ENCODE measurements at regions of chr4 and their contacts with region 1.

Region 1: DNA sequence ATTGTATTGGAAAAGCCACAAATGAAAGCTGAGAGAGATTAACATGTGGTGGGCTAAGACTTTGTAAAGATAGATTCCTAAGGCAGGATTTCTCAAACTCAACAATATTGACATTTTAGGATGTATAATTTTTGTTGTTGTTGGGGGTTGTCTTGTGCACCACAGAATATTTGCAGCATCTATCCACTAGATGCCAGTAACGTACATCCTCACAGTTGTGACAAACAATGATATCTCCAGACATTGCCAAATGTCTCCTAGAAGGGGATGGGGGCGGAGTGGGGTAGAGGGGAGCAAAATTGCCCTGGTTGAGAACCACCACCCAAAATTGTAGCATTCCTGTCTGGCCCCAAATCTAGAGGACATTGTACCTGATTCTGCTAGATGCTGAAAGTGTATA is 14.7 kb upstream of the CBR4 start:
- DNase-seq: no peak
- ATAC-seq: peak; percentile 85 to 90
- H3K4me3 ChIP-seq: no peak overlapping the region
- H3K27ac ChIP-seq: no peak overlapping the region
- H3K4me1 ChIP-seq: no peaks in the 10 kb centered on the region
- H3K27me3 ChIP-seq: no peaks in the 10 kb centered on the region

Region 2: DNA sequence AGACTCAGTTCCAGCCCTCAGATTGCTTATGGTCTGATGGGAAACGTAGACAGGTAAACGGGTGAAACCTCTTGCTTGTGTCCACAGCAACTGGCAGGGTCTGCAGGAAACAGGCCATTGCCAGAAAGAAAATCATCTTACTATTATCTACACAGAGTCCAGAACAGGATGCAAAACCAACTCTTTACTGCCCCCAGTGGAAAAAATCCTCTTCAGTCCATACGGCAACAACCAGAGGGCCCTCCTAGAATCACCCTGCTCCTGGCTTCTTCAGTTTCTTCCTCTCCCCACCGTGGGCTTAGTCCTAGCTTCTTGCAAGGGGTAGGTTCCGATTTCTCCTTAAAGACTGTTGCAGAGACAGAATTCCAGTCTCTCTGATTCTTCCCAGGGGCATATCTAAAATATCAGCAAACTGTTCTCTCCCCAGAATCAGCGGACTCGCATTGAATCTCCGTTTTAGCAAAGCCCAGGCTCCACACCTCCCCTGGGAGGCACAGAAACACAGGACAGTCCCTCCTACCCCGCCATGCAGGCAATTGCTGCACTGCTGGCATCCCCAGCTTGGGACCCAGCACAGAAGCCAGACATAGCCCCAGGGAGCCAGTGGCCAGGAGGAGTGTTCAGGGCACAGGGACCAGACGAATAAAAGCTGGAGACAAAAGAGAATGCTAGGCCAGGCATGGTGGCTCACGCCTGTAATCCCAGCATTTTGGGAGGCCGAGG is 287.0 kb after region 1 on chr4:
- intact Hi-C with region 1: loop called in 1 of 4 experiments (anchors 10 kb)
- DNase-seq: peak in 1 of 3 donors; percentile 44
- ATAC-seq: peak; percentile 79 to 85
- H3K4me3 ChIP-seq: no peak overlapping the region
- H3K27ac ChIP-seq: no peak overlapping the region
- H3K4me1 ChIP-seq: peaks cover 5% of the 10 kb centered on the region
- H3K27me3 ChIP-seq: no peaks in the 10 kb centered on the region

Region 3: GRCh38 chr4:169485791-169486742 is 461.3 kb after region 1 on chr4:
- intact Hi-C with region 1: loop called (anchors 10 kb)
- DNase-seq: no peak
- ATAC-seq: peak in 1 of 2 donors; percentile 52
- H3K4me3 ChIP-seq: no peak overlapping the region
- H3K27ac ChIP-seq: no peak overlapping the region
- H3K4me1 ChIP-seq: no peaks in the 10 kb centered on the region
- H3K27me3 ChIP-seq: no peaks in the 10 kb centered on the region

Measured in right cardiac atrium (tissue), 5 donors.